Ascending aorta (tissue), 2 donors: ENCODE measurements at regions of chr20 and their contacts with region 1.

Region 1: GRCh38 chr20:31822421-31823330 is 3.5 kb downstream of the MYLK2 start:
- DNase-seq: peak; percentile 59 to 94
- H3K4me3 ChIP-seq: peak overlapping the region in 1 of 2 donors; percentile 1
- H3K27ac ChIP-seq: peak overlapping the region; percentile 53 to 79
- H3K4me1 ChIP-seq: peaks cover 9 to 29% of the 10 kb centered on the region in 2 donors
- H3K27me3 ChIP-seq: no peaks in the 10 kb centered on the region
- CTCF ChIP-seq: peak; percentile 95 to 99 (median 98)

Region 2: GRCh38 chr20:31617432-31618104 is 205.1 kb before region 1 on chr20:
- intact Hi-C with region 1: no loop called
- DNase-seq: no peak
- H3K4me3 ChIP-seq: no peak overlapping the region
- H3K27ac ChIP-seq: no peak overlapping the region
- H3K4me1 ChIP-seq: peaks cover 0 to 7% of the 10 kb centered on the region in 2 donors
- H3K27me3 ChIP-seq: no peaks in the 10 kb centered on the region
- CTCF ChIP-seq: no peak

Region 3: GRCh38 chr20:31835977-31836852 is 13.5 kb after region 1 on chr20:
- intact Hi-C with region 1: loop called (anchors 1 kb)
- DNase-seq: peak; percentile 90 to 95
- H3K4me3 ChIP-seq: no peak overlapping the region
- H3K27ac ChIP-seq: peak overlapping the region; percentile 94 to 95
- H3K4me1 ChIP-seq: peaks cover 31 to 54% of the 10 kb centered on the region in 2 donors
- H3K27me3 ChIP-seq: no peaks in the 10 kb centered on the region
- CTCF ChIP-seq: no peak

Region 4: DNA sequence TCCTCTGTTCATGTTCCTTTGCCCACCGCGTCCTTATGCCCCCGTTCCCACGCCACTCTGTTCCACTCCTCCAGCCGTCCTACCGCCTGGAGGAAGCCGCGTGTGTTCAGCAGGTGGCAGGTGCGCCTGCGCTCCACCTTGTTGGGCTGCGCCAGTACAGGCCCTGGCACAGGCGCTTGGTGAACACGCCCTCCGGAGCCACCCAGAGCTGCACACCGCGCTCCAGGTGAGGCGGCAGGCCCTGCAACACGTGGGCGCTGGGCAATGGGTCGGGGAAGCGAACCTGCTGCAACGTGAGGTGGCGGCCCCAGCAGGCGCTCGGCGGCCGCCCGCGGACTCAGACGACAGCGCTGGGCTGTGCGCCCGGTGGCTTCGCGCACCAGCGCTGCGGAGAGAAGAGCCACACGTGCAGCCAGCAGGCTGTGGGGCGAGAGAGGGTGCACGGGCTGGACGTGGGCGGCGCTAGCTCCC is 26.8 kb after region 1 on chr20:
- intact Hi-C with region 1: loop called (anchors 1 kb)
- DNase-seq: no peak
- H3K4me3 ChIP-seq: no peak overlapping the region
- H3K27ac ChIP-seq: no peak overlapping the region
- H3K4me1 ChIP-seq: peaks cover 9% of the 10 kb centered on the region in 2 donors
- H3K27me3 ChIP-seq: no peaks in the 10 kb centered on the region
- CTCF ChIP-seq: no peak

Region 5: GRCh38 chr20:31951530-31952453 is 129.1 kb after region 1 on chr20 and contains the start of gene PDRG1:
- intact Hi-C with region 1: loop called (anchors 1 kb)
- DNase-seq: peak; percentile 79 to 97
- H3K4me3 ChIP-seq: peak within 1 kb of the TSS; percentile 95 to 100
- H3K27ac ChIP-seq: peak within 1 kb of the TSS; percentile 77 to 81
- H3K4me1 ChIP-seq: peaks cover 8 to 12% of the 10 kb centered on the region in 2 donors
- H3K27me3 ChIP-seq: no peaks in the 10 kb centered on the region
- CTCF ChIP-seq: peak; percentile 91 to 96 (median 94)
- total RNA-seq, gene PDRG1: 1.7 TPM

Region 6: GRCh38 chr20:32031007-32031958 is 208.6 kb after region 1 on chr20:
- intact Hi-C with region 1: loop called (anchors 1 kb)
- DNase-seq: peak in 1 of 2 donors; percentile 78
- H3K4me3 ChIP-seq: peak overlapping the region; percentile 10 to 52
- H3K27ac ChIP-seq: no peak overlapping the region
- H3K4me1 ChIP-seq: peaks cover 3 to 8% of the 10 kb centered on the region in 2 donors
- H3K27me3 ChIP-seq: no peaks in the 10 kb centered on the region
- CTCF ChIP-seq: peak; percentile 73 to 82 (median 74)

Region 7: DNA sequence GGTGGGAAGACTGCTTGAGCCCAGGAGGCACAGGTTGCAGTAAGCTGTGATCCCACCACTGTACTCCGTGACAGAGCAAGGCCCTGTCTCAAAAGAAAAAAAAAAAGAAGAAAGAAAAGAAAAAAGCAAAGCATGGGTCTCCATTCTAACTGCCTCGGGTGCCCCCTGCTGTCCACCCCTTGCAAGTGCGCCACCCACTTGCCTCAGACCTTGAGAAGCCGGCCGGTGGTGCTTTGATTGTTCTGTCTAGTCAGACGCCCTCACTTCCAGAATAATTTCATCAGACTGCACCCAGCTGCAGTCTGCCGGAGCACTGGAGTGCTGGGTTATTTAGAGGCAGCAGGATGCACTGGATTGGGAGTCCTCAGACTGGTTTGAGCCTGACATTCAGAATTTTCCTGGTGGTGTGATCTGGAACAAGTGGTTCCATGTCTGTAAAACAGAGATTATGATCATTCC is 269.2 kb after region 1 on chr20:
- intact Hi-C with region 1: loop called (anchors 1 kb)
- DNase-seq: peak in 1 of 2 donors; percentile 83
- H3K4me3 ChIP-seq: no peak overlapping the region
- H3K27ac ChIP-seq: no peak overlapping the region
- H3K4me1 ChIP-seq: no peaks in the 10 kb centered on the region
- H3K27me3 ChIP-seq: no peaks in the 10 kb centered on the region
- CTCF ChIP-seq: peak; percentile 48 to 91 (median 86)

Region 8: GRCh38 chr20:32207626-32208498 is 385.2 kb after region 1 on chr20 and contains the starts of genes PLAGL2 and POFUT1:
- intact Hi-C with region 1: loop called (anchors 10 kb)
- DNase-seq: peak; percentile 36 to 93
- H3K4me3 ChIP-seq: peak within 1 kb of the TSS; percentile 95 to 97
- H3K27ac ChIP-seq: peak within 1 kb of the TSS; percentile 77 to 78
- H3K4me1 ChIP-seq: peaks cover 0 to 33% of the 10 kb centered on the region in 2 donors
- H3K27me3 ChIP-seq: no peaks in the 10 kb centered on the region
- CTCF ChIP-seq: peak in 1 of 3 experiments; percentile 13
- total RNA-seq, gene PLAGL2: 6.7 TPM
- total RNA-seq, gene POFUT1: 29.8 TPM